Aorta (tissue), 5 donors: ENCODE measurements at regions of chr1 and their contacts with region 1.

Region 1: GRCh38 chr1:207828485-207829158 is 76.8 kb downstream of the CD46 start:
- DNase-seq: peak; percentile 87 to 89
- ATAC-seq: peak; percentile 63
- H3K4me3 ChIP-seq: no peak overlapping the region
- H3K27ac ChIP-seq: no peak overlapping the region
- H3K4me1 ChIP-seq: peaks cover 0 to 3% of the 10 kb centered on the region in 2 donors
- H3K27me3 ChIP-seq: no peaks in the 10 kb centered on the region

Region 2: DNA sequence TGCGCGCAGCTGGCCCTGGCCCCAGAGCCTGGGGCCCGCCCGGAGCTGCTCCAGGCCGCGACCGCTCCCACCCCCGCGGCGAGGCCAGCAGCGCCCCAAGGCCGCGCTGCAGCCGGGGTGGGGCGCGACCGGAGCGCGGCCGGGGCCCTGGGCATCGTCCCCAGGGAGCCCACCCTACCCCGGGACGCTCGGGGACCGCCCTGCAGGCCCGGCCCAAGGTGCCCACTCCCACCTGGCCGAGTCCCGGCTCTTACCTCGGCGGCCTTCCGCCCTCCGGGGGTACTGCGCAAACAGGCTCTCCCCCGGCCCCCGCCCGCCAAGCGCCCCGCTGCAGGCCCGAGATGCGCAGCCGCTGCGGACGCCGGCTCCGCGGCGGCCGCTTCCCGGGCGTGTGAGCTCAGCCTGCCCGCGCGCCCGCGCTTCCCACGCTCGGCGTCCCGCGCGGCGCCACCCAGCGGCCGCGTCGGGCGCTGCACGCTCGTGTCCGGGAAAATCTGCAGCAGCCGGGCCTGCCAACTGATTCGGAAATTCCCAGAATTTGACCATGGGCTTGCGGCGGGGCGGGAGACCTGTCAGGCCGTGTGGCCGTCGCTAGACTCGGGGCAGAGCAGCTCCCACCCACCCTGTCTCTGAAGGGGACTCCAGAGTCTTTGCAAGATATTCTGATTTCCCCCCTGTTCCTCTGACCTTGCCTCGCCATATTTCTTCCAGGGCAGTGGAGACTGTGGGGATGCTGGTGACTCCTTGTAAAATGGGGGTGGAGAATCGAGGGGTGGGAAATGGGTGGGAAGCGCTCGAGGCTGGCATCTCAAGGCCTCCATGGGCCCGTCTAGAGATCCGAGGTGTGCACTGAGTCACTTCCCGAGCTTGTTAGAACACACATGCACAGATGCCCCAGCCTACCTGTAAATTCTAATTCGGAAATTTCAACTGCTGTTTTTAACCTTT is 40.4 kb after region 1 on chr1:
- intact Hi-C with region 1: loop called (anchors 2 kb)
- DNase-seq: peak; percentile 86 to 95
- ATAC-seq: peak; percentile 87
- H3K4me3 ChIP-seq: peak overlapping the region; percentile 82 to 91
- H3K27ac ChIP-seq: peak overlapping the region; percentile 29 to 92
- H3K4me1 ChIP-seq: no peaks in the 10 kb centered on the region
- H3K27me3 ChIP-seq: no peaks in the 10 kb centered on the region